ENCODE measurements at regions of chr4 and their contacts with region 1.

Region 1: GRCh38 chr4:158624889-158625478 is 46.7 kb downstream of the C4orf46 start:
- DNase-seq: peak; percentile 28 to 65 (median 46)
- ATAC-seq: peak; percentile 92
- H3K4me3 ChIP-seq: no peak overlapping the region
- H3K27ac ChIP-seq: no peak overlapping the region
- H3K4me1 ChIP-seq: no peaks in the 10 kb centered on the region
- H3K27me3 ChIP-seq: no peaks in the 10 kb centered on the region
- CTCF ChIP-seq: peak; percentile 60 to 76 (median 62); a peak in 5 of 6 replicates
- EP300 ChIP-seq: no peak
- POLR2A ChIP-seq: no peak
- RAD21 ChIP-seq: peak; percentile 85 to 89

Region 2: DNA sequence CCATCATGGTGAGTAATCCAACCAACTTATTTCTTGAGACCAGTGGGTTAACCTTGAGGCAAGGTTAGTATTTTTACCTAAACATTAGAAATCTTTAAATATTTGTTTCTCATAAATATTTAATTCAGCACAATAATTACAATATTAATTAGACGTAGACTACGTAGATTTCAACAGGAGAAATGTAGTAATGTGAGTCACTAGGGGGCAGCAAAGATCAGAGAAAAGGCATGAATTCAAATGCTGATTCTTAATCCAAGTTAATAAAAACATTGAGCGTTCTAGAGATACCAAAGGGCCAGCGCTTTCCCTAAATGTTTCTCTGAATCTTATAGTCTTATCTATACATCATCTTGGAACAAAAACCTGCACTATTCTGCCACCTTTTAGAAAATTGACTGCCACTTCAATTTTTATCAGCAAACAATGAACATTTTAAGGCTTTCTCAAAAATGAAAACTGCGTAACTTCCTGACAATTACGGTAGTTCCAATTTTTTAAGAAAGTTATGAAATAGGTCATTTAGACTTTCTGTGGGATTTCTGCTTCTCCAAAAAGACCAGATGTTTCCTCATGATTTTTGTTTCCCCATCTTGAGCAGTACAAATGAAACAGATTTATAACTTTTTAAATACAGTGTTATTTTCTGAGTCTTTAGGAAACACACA is 632.8 kb before region 1 on chr4:
- CTCF ChIA-PET with region 1: no interaction called
- POLR2A ChIA-PET with region 1: no interaction called
- in situ Hi-C with region 1: no loop called
- intact Hi-C with region 1: loop called (anchors 5 kb)
- DNase-seq: peak; percentile 10 to 57 (median 12)
- ATAC-seq: no peak
- H3K4me3 ChIP-seq: no peak overlapping the region
- H3K27ac ChIP-seq: no peak overlapping the region
- H3K4me1 ChIP-seq: no peaks in the 10 kb centered on the region
- H3K27me3 ChIP-seq: no peaks in the 10 kb centered on the region
- CTCF ChIP-seq: peak; percentile 28 to 67 (median 37); a peak in 3 of 6 replicates
- EP300 ChIP-seq: no peak
- POLR2A ChIP-seq: no peak
- RAD21 ChIP-seq: peak; percentile 77 to 83

Region 3: DNA sequence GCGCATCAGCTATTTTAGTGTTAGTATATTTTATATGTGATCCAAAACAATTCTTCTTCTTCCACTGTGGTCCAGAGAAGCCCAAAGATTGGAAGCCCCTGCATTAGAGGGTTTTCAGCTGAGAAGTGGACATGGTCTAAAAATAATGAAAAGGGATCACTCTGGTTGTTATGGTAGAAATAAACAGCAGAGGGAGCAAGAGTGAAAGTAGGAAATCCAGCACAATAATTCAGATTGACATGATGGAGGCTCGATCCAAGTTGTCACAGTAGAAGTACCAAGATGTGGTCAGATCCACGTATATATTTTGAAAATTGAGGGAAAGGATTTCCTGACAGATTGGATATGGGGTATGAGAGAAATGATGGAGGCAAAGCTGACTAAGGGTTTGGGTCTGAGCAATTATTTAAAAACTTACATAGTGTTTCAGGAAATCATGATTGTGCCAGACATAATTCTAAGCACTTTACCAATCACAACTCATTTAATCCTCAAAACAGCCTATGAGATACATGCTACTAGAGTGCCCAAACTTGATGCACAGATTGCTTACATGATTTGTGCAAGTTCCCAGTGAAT is 431.7 kb before region 1 on chr4:
- CTCF ChIA-PET with region 1: no interaction called
- POLR2A ChIA-PET with region 1: no interaction called
- in situ Hi-C with region 1: no loop called
- intact Hi-C with region 1: loop called (anchors 10 kb)
- DNase-seq: peak; percentile 31 to 43 (median 42)
- ATAC-seq: peak; percentile 82
- H3K4me3 ChIP-seq: no peak overlapping the region
- H3K27ac ChIP-seq: no peak overlapping the region
- H3K4me1 ChIP-seq: no peaks in the 10 kb centered on the region
- H3K27me3 ChIP-seq: no peaks in the 10 kb centered on the region
- CTCF ChIP-seq: peak; percentile 49 to 71 (median 51); a peak in 5 of 6 replicates
- EP300 ChIP-seq: no peak
- POLR2A ChIP-seq: no peak
- RAD21 ChIP-seq: peak; percentile 48 to 69

Region 4: DNA sequence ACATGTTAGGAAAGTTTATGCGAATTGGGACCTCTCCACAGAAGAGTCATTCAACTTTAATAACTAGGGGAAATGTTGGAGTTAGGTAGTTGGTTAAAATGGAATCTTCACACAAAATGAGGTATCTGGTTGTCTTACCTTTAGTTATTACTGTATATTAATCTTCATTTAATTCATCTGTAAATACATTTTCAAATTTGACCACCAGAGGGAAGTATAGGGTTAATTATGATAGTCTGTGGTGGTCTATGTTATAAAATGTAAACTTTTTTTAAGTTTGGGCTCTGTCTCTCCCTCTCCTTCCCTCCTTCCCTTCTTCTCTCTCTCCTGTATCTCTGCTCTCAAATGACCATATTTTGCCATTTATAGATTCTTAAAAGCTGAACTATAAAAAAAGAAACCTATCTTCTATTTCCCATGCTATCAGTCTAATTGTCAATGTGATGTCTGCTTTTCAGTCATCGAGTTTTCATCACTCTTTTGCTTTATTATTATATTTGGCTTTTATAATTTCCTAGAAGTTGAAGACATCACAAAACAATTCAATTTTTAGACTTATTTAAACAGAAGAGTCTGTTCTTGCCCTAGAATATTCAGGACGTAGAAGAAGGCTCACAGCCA is 364.9 kb before region 1 on chr4:
- CTCF ChIA-PET with region 1: interaction called, 33 read pairs
- POLR2A ChIA-PET with region 1: interaction called, 3 read pairs
- in situ Hi-C with region 1: loop called (anchors 5 kb)
- intact Hi-C with region 1: loop called (anchors 1 kb)
- DNase-seq: peak in 1 of 4 experiments; percentile 34
- ATAC-seq: peak; percentile 77
- H3K4me3 ChIP-seq: no peak overlapping the region
- H3K27ac ChIP-seq: no peak overlapping the region
- H3K4me1 ChIP-seq: no peaks in the 10 kb centered on the region
- H3K27me3 ChIP-seq: no peaks in the 10 kb centered on the region
- CTCF ChIP-seq: peak in 2 of 3 experiments; percentile 20 to 61; a peak in 3 of 6 replicates
- EP300 ChIP-seq: no peak
- POLR2A ChIP-seq: no peak
- RAD21 ChIP-seq: peak; percentile 73 to 79

Region 5: GRCh38 chr4:158410272-158410671 is 214.7 kb before region 1 on chr4:
- CTCF ChIA-PET with region 1: interaction called, 6 read pairs
- POLR2A ChIA-PET with region 1: no interaction called
- in situ Hi-C with region 1: no loop called
- intact Hi-C with region 1: loop called (anchors 1 kb)
- DNase-seq: peak in 1 of 4 experiments; percentile 13
- ATAC-seq: peak; percentile 67
- H3K4me3 ChIP-seq: no peak overlapping the region
- H3K27ac ChIP-seq: no peak overlapping the region
- H3K4me1 ChIP-seq: peaks cover 0 to 5% of the 10 kb centered on the region in 2 experiments; a peak in 1 of 5 replicates
- H3K27me3 ChIP-seq: no peaks in the 10 kb centered on the region
- CTCF ChIP-seq: peak in 2 of 3 experiments; percentile 27 to 46; a peak in 2 of 6 replicates
- EP300 ChIP-seq: no peak
- POLR2A ChIP-seq: no peak
- RAD21 ChIP-seq: peak; percentile 35 to 50

Region 6: GRCh38 chr4:158496030-158496741 is 128.8 kb before region 1 on chr4:
- CTCF ChIA-PET with region 1: interaction called, 6 read pairs
- POLR2A ChIA-PET with region 1: no interaction called
- in situ Hi-C with region 1: no loop called
- intact Hi-C with region 1: loop called (anchors 1 kb)
- DNase-seq: peak; percentile 26 to 62 (median 36)
- ATAC-seq: peak; percentile 72; the same call in 2 of the 3 replicates
- H3K4me3 ChIP-seq: no peak overlapping the region
- H3K27ac ChIP-seq: no peak overlapping the region
- H3K4me1 ChIP-seq: no peaks in the 10 kb centered on the region
- H3K27me3 ChIP-seq: no peaks in the 10 kb centered on the region; a peak in 1 of 5 replicates
- CTCF ChIP-seq: peak; percentile 48 to 70 (median 66); a peak in 5 of 6 replicates
- EP300 ChIP-seq: no peak
- POLR2A ChIP-seq: no peak
- RAD21 ChIP-seq: peak; percentile 37 to 61; a peak in 3 of 4 replicates

Region 7: GRCh38 chr4:158656439-158656838 is 31.5 kb after region 1 on chr4:
- CTCF ChIA-PET with region 1: no interaction called
- POLR2A ChIA-PET with region 1: no interaction called
- in situ Hi-C with region 1: no loop called
- intact Hi-C with region 1: no loop called
- DNase-seq: no peak
- ATAC-seq: no peak
- H3K4me3 ChIP-seq: no peak overlapping the region
- H3K27ac ChIP-seq: no peak overlapping the region
- H3K4me1 ChIP-seq: peaks cover 0 to 5% of the 10 kb centered on the region in 2 experiments; a peak in 2 of 5 replicates
- H3K27me3 ChIP-seq: no peaks in the 10 kb centered on the region
- CTCF ChIP-seq: no peak
- EP300 ChIP-seq: no peak
- POLR2A ChIP-seq: no peak
- RAD21 ChIP-seq: no peak